Caco-2 (cell line): ENCODE measurements at regions of chr2 and their contacts with region 1.

Region 1: DNA sequence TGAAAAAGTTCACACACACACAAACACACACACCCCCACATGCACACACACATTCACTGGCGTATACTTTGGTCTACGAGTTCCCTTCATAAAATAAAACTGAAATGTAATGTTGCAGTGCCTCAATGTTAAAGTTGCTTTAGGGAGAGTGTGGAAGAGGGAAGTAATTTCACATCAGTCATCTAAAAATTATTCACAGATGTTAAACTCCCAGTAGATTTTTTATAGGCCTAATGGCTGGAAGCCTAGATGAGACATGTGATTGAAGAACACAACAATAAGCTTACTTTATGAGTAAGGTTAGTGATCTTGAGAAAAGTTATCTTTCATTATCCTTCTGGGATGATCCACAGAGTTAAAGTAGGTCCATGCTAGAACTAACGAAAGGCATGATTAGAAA is 506.7 kb upstream of the CNTNAP5 start:
- DNase-seq: no peak
- H3K4me3 ChIP-seq: no peak overlapping the region
- H3K4me3 Mint-ChIP-seq: no peak overlapping the region
- H3K27ac Mint-ChIP-seq: no peak overlapping the region
- H3K4me1 ChIP-seq: no peaks in the 10 kb centered on the region
- H3K4me1 Mint-ChIP-seq: no peaks in the 10 kb centered on the region
- H3K27me3 ChIP-seq: no peaks in the 10 kb centered on the region
- H3K27me3 Mint-ChIP-seq: peaks cover 3% of the 10 kb centered on the region
- CTCF ChIP-seq: no peak

Region 2: GRCh38 chr2:123771928-123772632 is 253.7 kb after region 1 on chr2:
- CTCF ChIA-PET with region 1: no interaction called
- POLR2A ChIA-PET with region 1: no interaction called
- intact Hi-C with region 1: loop called (anchors 10 kb)
- DNase-seq: no peak
- H3K4me3 ChIP-seq: no peak overlapping the region
- H3K4me3 Mint-ChIP-seq: no peak overlapping the region
- H3K27ac Mint-ChIP-seq: no peak overlapping the region
- H3K4me1 ChIP-seq: no peaks in the 10 kb centered on the region
- H3K4me1 Mint-ChIP-seq: no peaks in the 10 kb centered on the region
- H3K27me3 ChIP-seq: no peaks in the 10 kb centered on the region
- H3K27me3 Mint-ChIP-seq: no peaks in the 10 kb centered on the region
- CTCF ChIP-seq: no peak

Region 3: DNA sequence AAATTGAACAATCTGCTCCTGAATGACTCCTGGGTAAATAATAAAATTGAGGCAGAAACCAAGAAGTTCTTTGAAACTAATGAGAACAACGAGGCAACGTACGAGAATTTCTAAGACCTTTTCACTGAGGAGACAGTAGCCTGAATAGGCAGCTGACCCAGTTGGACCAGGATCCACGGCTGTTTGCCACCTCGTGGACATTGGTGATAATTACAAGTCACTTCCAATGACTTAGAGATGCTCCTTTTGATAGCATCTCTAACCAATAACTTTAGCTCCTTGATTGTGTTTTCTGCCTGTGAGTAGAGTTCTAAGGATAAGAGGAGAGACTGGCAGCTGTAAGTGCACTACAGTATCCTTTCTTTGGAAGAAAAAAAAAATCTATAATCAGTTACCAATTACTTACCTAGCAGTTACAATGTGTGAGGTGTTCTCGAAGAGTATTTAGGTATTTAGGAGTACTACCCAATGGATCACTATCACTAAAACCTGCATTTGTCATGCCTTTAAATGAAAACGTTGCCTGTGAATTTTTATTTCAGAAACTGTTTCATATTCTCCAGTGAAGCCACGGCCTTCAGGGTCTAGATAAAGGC is 475.5 kb after region 1 on chr2:
- CTCF ChIA-PET with region 1: no interaction called
- POLR2A ChIA-PET with region 1: no interaction called
- intact Hi-C with region 1: loop called (anchors 5 kb)
- DNase-seq: peak; percentile 43 to 55
- H3K4me3 ChIP-seq: no peak overlapping the region
- H3K4me3 Mint-ChIP-seq: no peak overlapping the region
- H3K27ac Mint-ChIP-seq: no peak overlapping the region
- H3K4me1 ChIP-seq: no peaks in the 10 kb centered on the region
- H3K4me1 Mint-ChIP-seq: no peaks in the 10 kb centered on the region
- H3K27me3 ChIP-seq: no peaks in the 10 kb centered on the region
- H3K27me3 Mint-ChIP-seq: peaks cover 4% of the 10 kb centered on the region
- CTCF ChIP-seq: peak; percentile 57 to 69